ENCODE measurements at regions of chr1 and their contacts with region 1.

Region 1: GRCh38 chr1:35505908-35506798 is 51.0 kb downstream of the KIAA0319L start:
- DNase-seq: peak; percentile 78
- H3K4me3 Mint-ChIP-seq: peak overlapping the region; percentile 44
- H3K27ac Mint-ChIP-seq: peak overlapping the region; percentile 93
- H3K4me1 Mint-ChIP-seq: peaks cover 67% of the 10 kb centered on the region
- H3K27me3 Mint-ChIP-seq: no peaks in the 10 kb centered on the region

Region 2: DNA sequence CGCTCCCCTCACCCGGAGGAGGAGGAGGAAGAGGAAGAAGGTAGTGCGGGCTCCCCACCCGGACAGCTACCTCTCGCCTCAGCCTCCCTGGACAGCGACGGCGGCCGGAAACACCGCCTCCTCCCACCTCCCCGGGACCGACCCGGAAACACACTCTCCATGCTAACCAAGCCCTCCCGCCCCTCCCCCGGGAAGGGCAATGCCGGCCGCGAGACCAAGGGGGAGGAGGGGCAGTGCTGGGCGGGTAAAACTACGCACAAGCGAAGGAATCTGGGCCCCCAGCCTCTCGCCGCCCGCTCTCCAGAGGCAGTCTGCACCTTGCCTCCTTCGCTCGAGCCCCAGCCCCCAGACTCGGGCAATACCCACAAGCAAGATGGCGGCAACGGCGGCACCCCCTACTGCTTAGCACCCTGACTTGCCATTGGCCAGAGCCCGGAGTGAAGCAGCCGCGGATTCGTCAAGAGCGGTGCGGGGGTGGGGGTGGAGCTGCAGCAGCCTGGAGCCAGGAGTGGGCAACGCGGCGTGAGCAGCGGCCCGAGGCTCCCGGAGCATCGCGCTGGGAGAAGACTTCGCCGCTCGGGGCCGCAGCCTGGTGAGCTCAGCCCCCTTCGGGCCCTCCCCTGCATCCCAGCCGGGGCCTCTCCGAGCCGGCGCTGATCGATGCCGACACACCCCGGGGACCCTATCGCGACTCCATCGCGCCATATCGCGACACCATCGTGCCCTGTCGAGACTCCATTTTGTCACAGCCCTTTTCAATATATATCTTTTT is 51.3 kb after region 1 on chr1 and contains the starts of genes KIAA0319L and NCDN:
- CTCF ChIA-PET with region 1: no interaction called
- POLR2A ChIA-PET with region 1: interaction called, 13 read pairs
- DNase-seq: peak; percentile 97
- H3K4me3 Mint-ChIP-seq: peak within 1 kb of the TSS; percentile 97
- H3K27ac Mint-ChIP-seq: peak within 1 kb of the TSS; percentile 98
- H3K4me1 Mint-ChIP-seq: peaks cover 46% of the 10 kb centered on the region
- H3K27me3 Mint-ChIP-seq: no peaks in the 10 kb centered on the region
- total RNA-seq, gene KIAA0319L: 37.6 to 46.3 TPM
- total RNA-seq, gene NCDN: 19.4 to 21.4 TPM